HCT116 (cell line): ENCODE measurements at regions of chr2 and their contacts with region 1.

Region 1: GRCh38 chr2:11234309-11234708 is 79.0 kb downstream of the SLC66A3 start:
- DNase-seq: no peak
- ATAC-seq: peak; percentile 60; the same call in 1 of the 2 replicates
- H3K4me3 ChIP-seq: no peak overlapping the region
- H3K27ac ChIP-seq: no peak overlapping the region
- H3K4me1 ChIP-seq: peaks cover 0 to 6% of the 10 kb centered on the region in 2 experiments; a peak in 1 of 4 replicates
- H3K27me3 ChIP-seq: no peaks in the 10 kb centered on the region
- CTCF ChIP-seq: peak; percentile 14 to 82 (median 68); a peak in 5 of 6 replicates
- POLR2A ChIP-seq: no peak
- RAD21 ChIP-seq: peak; percentile 78

Region 2: DNA sequence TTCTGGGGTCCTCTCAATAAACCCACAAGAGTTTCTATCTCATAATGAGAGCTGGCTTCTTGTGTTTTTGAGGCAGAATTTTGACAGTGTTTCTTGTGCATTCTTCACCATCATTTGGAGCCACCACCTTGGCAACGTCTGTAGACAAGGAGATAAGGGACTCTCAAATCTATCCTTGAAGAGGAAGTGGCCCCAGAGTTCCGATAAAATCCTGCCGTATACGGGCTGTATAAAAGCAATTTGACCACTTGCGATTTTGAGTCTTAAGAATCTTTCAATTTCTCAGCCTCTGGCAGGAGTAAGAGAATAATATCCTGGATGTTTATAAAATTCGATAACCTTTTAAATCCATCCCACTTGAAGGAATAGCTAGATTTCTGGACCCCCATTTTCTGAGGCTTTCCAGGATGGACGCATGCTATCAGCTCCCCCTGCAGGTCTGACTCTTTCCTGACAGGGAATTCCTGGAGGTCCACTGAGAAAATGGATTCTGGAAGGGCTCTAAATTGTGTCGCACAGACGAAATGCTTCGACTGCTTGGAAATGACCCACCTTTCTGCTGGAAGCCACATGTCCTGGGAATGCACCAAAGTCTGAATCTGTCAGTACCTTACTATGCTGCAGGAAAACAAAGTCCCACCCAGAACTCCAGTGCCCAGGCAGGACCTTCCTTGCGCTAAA is 177.6 kb after region 1 on chr2:
- CTCF ChIA-PET with region 1: interaction called, 46 read pairs
- POLR2A ChIA-PET with region 1: no interaction called
- RAD21 ChIA-PET with region 1: interaction called, 3 to 10 read pairs
- intact Hi-C with region 1: loop called (anchors 1 kb)
- DNase-seq: no peak
- ATAC-seq: peak; percentile 75
- H3K4me3 ChIP-seq: 0 out of 4 replicates have a peak overlapping the region, but pooled peaks of 1 of the 2 experiments have one; percentile 1
- H3K27ac ChIP-seq: no peak overlapping the region
- H3K4me1 ChIP-seq: peaks cover 0 to 14% of the 10 kb centered on the region in 2 experiments; a peak in 1 of 4 replicates
- H3K27me3 ChIP-seq: no peaks in the 10 kb centered on the region
- CTCF ChIP-seq: peak; percentile 82 to 87 (median 83)
- POLR2A ChIP-seq: no peak
- RAD21 ChIP-seq: peak; percentile 95

Region 3: GRCh38 chr2:11446733-11447248 is 212.5 kb after region 1 on chr2:
- CTCF ChIA-PET with region 1: interaction called, 10 read pairs
- POLR2A ChIA-PET with region 1: no interaction called
- RAD21 ChIA-PET with region 1: no interaction called
- intact Hi-C with region 1: loop called (anchors 1 kb)
- DNase-seq: peak; percentile 22
- ATAC-seq: peak; percentile 82
- H3K4me3 ChIP-seq: no peak overlapping the region
- H3K27ac ChIP-seq: no peak overlapping the region
- H3K4me1 ChIP-seq: no peaks in the 10 kb centered on the region
- H3K27me3 ChIP-seq: no peaks in the 10 kb centered on the region
- CTCF ChIP-seq: peak; percentile 59 to 88 (median 70); a peak in 5 of 6 replicates
- POLR2A ChIP-seq: no peak
- RAD21 ChIP-seq: peak; percentile 76